Activated CD4-positive, alpha-beta T cell treated with anti-CD3 and anti-CD28 coated beads for 36 hours (primary cell): ENCODE measurements at regions of chr17 and their contacts with region 1.

Region 1: GRCh38 chr17:60142872-60143499 is 6.8 kb upstream of the CA4 start:
- DNase-seq: peak; percentile 92
- ATAC-seq: peak; percentile 80
- H3K4me3 Mint-ChIP-seq: no peak overlapping the region
- H3K27ac Mint-ChIP-seq: no peak overlapping the region
- H3K4me1 Mint-ChIP-seq: peaks cover 18% of the 10 kb centered on the region
- H3K27me3 Mint-ChIP-seq: peaks cover 75% of the 10 kb centered on the region

Region 2: GRCh38 chr17:60106220-60107059 is 36.5 kb before region 1 on chr17:
- CTCF ChIA-PET with region 1: no interaction called
- POLR2A ChIA-PET with region 1: no interaction called
- intact Hi-C with region 1: no loop called
- DNase-seq: no peak
- ATAC-seq: no peak
- H3K4me3 Mint-ChIP-seq: no peak overlapping the region
- H3K27ac Mint-ChIP-seq: no peak overlapping the region
- H3K4me1 Mint-ChIP-seq: peaks cover 14% of the 10 kb centered on the region
- H3K27me3 Mint-ChIP-seq: peaks cover 21% of the 10 kb centered on the region

Region 3: DNA sequence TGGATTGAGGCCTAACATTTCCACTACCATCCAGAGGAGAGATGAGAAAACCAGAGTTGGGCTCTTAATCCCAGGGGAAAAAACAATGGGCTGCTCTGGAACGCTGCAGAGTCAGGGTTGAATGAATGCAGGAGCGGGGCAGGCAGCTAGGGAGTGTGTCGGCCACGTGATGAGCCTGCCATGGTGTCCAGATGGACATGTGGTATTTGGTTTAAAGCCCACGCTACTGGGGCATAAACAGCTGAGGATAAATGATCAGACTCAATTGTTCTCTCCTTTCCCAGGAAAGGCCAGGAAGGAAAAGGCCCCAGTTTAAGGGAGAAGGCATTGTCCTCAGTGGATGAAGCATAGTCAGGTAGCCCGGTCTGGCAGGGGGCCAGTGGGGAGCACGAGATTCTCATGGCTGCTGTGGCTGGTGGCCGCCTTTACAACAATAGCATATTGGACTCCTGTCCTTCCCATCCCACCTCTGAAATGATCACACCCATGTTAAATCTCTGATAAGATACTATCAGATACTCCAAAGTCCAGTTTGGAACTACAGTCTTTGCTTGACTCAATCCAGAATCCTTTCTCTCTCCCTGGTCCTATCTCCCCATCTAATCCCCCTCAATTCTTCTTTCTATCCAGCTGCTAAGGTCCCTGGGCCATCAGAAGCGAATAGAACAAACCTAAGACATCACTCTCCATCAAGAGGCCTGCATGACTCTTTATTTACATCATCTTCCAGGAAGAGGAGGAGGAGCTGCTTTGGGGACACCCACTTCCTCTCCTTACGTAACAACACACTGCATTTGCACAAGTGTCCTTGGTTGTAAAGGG is 27.1 kb after region 1 on chr17:
- CTCF ChIA-PET with region 1: interaction called, 12 read pairs
- POLR2A ChIA-PET with region 1: no interaction called
- intact Hi-C with region 1: no loop called
- DNase-seq: peak; percentile 32
- ATAC-seq: peak; percentile 51
- H3K4me3 Mint-ChIP-seq: no peak overlapping the region
- H3K27ac Mint-ChIP-seq: peak overlapping the region; percentile 79
- H3K4me1 Mint-ChIP-seq: peaks cover 26% of the 10 kb centered on the region
- H3K27me3 Mint-ChIP-seq: no peaks in the 10 kb centered on the region

Region 4: GRCh38 chr17:60231234-60231633 is 88.2 kb after region 1 on chr17:
- CTCF ChIA-PET with region 1: no interaction called
- POLR2A ChIA-PET with region 1: no interaction called
- intact Hi-C with region 1: loop called in 1 of 2 experiments (anchors 5 kb)
- DNase-seq: no peak
- ATAC-seq: no peak
- H3K4me3 Mint-ChIP-seq: no peak overlapping the region
- H3K27ac Mint-ChIP-seq: no peak overlapping the region
- H3K4me1 Mint-ChIP-seq: peaks cover 6% of the 10 kb centered on the region
- H3K27me3 Mint-ChIP-seq: no peaks in the 10 kb centered on the region